ENCODE measurements at regions of chr12 and their contacts with region 1.

Region 1: GRCh38 chr12:71551529-71551928 is 111.9 kb downstream of the LGR5 start:
- DNase-seq: no peak
- H3K4me3 ChIP-seq: no peak overlapping the region
- H3K27me3 ChIP-seq: no peaks in the 10 kb centered on the region; the same call in 1 of the 2 replicates
- CTCF ChIP-seq: peak; percentile 41; the same call in 1 of the 2 replicates

Region 2: GRCh38 chr12:71538807-71539206 is 12.7 kb before region 1 on chr12:
- CTCF ChIA-PET with region 1: interaction called, 11 read pairs
- POLR2A ChIA-PET with region 1: no interaction called
- DNase-seq: no peak
- H3K4me3 ChIP-seq: no peak overlapping the region
- H3K27me3 ChIP-seq: peaks cover 4% of the 10 kb centered on the region
- CTCF ChIP-seq: no peak

Region 3: DNA sequence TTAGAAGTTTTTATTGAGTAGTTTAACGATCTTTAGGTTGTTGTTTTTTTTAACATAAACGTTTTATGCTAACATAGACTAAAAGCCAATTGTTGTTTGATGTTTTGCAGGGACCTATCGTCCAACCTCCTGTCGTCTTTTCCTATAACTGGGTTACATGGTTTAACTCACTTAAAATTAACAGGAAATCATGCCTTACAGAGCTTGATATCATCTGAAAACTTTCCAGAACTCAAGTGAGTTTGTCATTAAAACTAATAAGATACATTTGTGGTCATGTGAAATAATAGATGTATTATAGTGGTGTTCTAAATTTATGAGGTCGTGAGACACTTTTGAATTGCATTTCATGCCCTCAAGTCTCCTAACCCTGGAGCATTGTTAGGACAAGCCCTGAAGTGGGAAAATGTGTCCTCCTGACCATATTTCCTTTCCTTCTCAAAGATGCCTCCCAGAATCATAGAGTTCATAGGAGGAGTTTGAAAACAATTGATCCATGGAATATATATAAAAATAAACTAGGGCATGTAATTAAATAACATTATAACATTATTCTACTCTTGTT is 27.2 kb after region 1 on chr12:
- CTCF ChIA-PET with region 1: no interaction called
- POLR2A ChIA-PET with region 1: no interaction called
- DNase-seq: no peak
- H3K4me3 ChIP-seq: no peak overlapping the region
- H3K27me3 ChIP-seq: peaks cover 1% of the 10 kb centered on the region; the same call in 1 of the 2 replicates
- CTCF ChIP-seq: no peak

Measured in BJ (cell line).